Activated CD4-positive, alpha-beta memory T cell treated with anti-CD3 and anti-CD28 coated beads, Interleukin-2, amount 10 ng/mL, durations not matched to agents 7 days and 5 days (primary cell): ENCODE measurements at regions of chr10 and their contacts with region 1.

Region 1: GRCh38 chr10:22682237-22683139 is 31.9 kb downstream of the PIP4K2A start:
- DNase-seq: peak; percentile 77
- H3K4me3 Mint-ChIP-seq: peak overlapping the region; percentile 69
- H3K27ac Mint-ChIP-seq: peak overlapping the region; percentile 100
- H3K4me1 Mint-ChIP-seq: peaks cover 86% of the 10 kb centered on the region
- H3K27me3 Mint-ChIP-seq: no peaks in the 10 kb centered on the region

Region 2: GRCh38 chr10:22648547-22648961 is 33.9 kb before region 1 on chr10:
- CTCF ChIA-PET with region 1: interaction called, 17 read pairs
- POLR2A ChIA-PET with region 1: interaction called, 86 read pairs
- DNase-seq: no peak
- H3K4me3 Mint-ChIP-seq: peak overlapping the region; percentile 66
- H3K27ac Mint-ChIP-seq: peak overlapping the region; percentile 91
- H3K4me1 Mint-ChIP-seq: peaks cover 91% of the 10 kb centered on the region
- H3K27me3 Mint-ChIP-seq: no peaks in the 10 kb centered on the region

Region 3: GRCh38 chr10:22655311-22655981 is 27.0 kb before region 1 on chr10:
- CTCF ChIA-PET with region 1: interaction called, 17 read pairs
- POLR2A ChIA-PET with region 1: interaction called, 86 read pairs
- DNase-seq: no peak
- H3K4me3 Mint-ChIP-seq: peak overlapping the region; percentile 36
- H3K27ac Mint-ChIP-seq: peak overlapping the region; percentile 85
- H3K4me1 Mint-ChIP-seq: peaks cover 94% of the 10 kb centered on the region
- H3K27me3 Mint-ChIP-seq: no peaks in the 10 kb centered on the region

Region 4: GRCh38 chr10:22666287-22667092 is 16.0 kb before region 1 on chr10:
- CTCF ChIA-PET with region 1: interaction called, 6 read pairs
- POLR2A ChIA-PET with region 1: interaction called, 62 read pairs
- DNase-seq: peak; percentile 67
- H3K4me3 Mint-ChIP-seq: peak overlapping the region; percentile 77
- H3K27ac Mint-ChIP-seq: peak overlapping the region; percentile 92
- H3K4me1 Mint-ChIP-seq: peaks cover 75% of the 10 kb centered on the region
- H3K27me3 Mint-ChIP-seq: no peaks in the 10 kb centered on the region

Region 5: GRCh38 chr10:22693371-22693784 is 10.9 kb after region 1 on chr10:
- CTCF ChIA-PET with region 1: interaction called, 10 read pairs
- POLR2A ChIA-PET with region 1: interaction called, 29 read pairs
- DNase-seq: no peak
- H3K4me3 Mint-ChIP-seq: peak overlapping the region; percentile 7
- H3K27ac Mint-ChIP-seq: peak overlapping the region; percentile 62
- H3K4me1 Mint-ChIP-seq: peaks cover 66% of the 10 kb centered on the region
- H3K27me3 Mint-ChIP-seq: no peaks in the 10 kb centered on the region

Region 6: GRCh38 chr10:22737587-22737986 is 55.1 kb after region 1 on chr10:
- CTCF ChIA-PET with region 1: no interaction called
- POLR2A ChIA-PET with region 1: no interaction called
- DNase-seq: no peak
- H3K4me3 Mint-ChIP-seq: no peak overlapping the region
- H3K27ac Mint-ChIP-seq: no peak overlapping the region
- H3K4me1 Mint-ChIP-seq: no peaks in the 10 kb centered on the region
- H3K27me3 Mint-ChIP-seq: peaks cover 6% of the 10 kb centered on the region